H1 (cell line): ENCODE measurements at regions of chr1 and their contacts with region 1.

Region 1: GRCh38 chr1:114122941-114123618 is 30.6 kb downstream of the SYT6 start:
- DNase-seq: no peak
- H3K4me3 ChIP-seq: no peak overlapping the region
- H3K27ac ChIP-seq: no peak overlapping the region
- H3K4me1 ChIP-seq: peaks cover 2 to 17% (median 9%) of the 10 kb centered on the region in 4 experiments
- H3K27me3 ChIP-seq: no peaks in the 10 kb centered on the region
- CTCF ChIP-seq: no peak; a peak in 1 of 4 replicates
- EP300 ChIP-seq: no peak
- POLR2A ChIP-seq: no peak
- RAD21 ChIP-seq: peak; percentile 9 to 23; a peak in 1 of 4 replicates

Region 2: DNA sequence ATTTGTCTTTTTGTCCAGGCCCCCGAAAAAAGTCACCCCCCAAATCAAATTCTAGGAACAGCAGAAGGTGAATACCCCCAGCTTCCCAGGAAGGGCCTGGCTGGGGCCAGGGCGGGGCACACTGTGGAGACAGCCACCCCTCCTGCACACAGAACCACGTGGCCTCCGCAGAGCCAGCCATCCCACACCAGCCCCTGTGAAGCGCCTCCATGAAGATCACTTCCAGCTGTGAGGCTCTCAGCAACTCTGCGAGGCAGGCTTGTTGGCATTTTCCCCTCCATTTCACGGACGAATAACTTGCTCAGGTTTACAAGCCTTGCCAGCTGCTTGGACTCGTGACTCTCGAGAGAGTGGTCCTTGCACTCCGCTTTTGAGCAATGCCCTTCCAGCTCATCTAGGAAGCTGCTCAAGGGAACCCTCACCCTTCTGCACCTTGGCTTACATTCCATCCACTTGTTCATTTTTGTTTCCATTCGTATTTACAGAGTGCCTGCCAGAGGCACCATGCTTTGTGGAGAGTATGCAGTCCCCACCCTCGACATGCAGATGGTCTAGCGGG is 17.6 kb before region 1 on chr1:
- CTCF ChIA-PET with region 1: interaction called, 11 read pairs
- POLR2A ChIA-PET with region 1: interaction called, 6 read pairs
- DNase-seq: no peak
- H3K4me3 ChIP-seq: no peak overlapping the region
- H3K27ac ChIP-seq: no peak overlapping the region
- H3K4me1 ChIP-seq: peaks cover 0 to 12% (median 7%) of the 10 kb centered on the region in 4 experiments
- H3K27me3 ChIP-seq: no peaks in the 10 kb centered on the region; a peak in 1 of 7 replicates
- CTCF ChIP-seq: no peak
- EP300 ChIP-seq: no peak
- POLR2A ChIP-seq: no peak
- RAD21 ChIP-seq: no peak

Region 3: GRCh38 chr1:114134518-114134917 is 11.4 kb after region 1 on chr1:
- CTCF ChIA-PET with region 1: interaction called, 16 read pairs
- POLR2A ChIA-PET with region 1: interaction called, 3 read pairs
- DNase-seq: no peak
- H3K4me3 ChIP-seq: no peak overlapping the region
- H3K27ac ChIP-seq: no peak overlapping the region
- H3K4me1 ChIP-seq: peaks cover 0 to 8% (median 4%) of the 10 kb centered on the region in 4 experiments; a peak in 2 of 7 replicates
- H3K27me3 ChIP-seq: no peaks in the 10 kb centered on the region
- CTCF ChIP-seq: no peak
- EP300 ChIP-seq: no peak
- POLR2A ChIP-seq: no peak
- RAD21 ChIP-seq: no peak

Region 4: DNA sequence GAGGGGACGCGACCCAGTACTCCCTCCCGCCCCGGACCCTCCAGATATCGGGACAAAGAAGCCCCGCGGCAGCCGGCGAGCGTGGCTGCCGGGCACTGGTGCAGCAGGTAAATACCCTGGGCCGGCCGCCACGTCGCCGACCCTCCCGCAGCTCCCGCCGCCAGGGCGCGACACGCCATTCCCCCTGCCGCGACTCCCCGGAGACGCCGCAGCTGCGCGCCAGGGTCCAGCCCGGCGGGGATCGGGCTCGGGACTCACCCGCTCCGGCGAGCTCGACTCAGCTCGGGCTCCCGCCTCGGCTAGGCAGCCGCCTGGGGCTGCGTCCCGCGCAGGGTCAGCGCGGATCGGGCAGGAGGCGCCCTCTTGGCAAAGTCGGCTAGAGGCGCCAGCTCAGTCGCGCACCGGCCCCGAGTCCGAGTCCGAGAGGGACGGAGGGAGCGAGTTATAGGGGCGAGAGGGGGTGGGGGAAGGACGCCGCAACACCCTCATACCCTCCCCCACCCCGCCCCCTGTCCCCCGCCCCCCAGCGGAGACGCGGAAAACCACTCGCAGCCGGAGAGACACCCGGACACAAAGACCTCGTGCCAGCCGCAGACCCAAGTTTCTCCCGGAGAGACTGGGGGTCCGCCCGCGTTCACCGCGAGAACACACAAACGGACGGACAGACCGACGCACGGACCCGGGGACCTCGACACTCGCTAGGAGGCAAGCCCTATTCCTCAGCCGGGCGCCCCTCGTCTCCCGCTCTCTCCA is 29.6 kb after region 1 on chr1:
- CTCF ChIA-PET with region 1: interaction called, 5 read pairs
- POLR2A ChIA-PET with region 1: interaction called, 15 read pairs
- DNase-seq: peak in 1 of 2 experiments; percentile 71
- H3K4me3 ChIP-seq: peak overlapping the region; percentile 79 to 85 (median 82)
- H3K27ac ChIP-seq: no peak overlapping the region
- H3K4me1 ChIP-seq: peaks cover 9 to 45% (median 22%) of the 10 kb centered on the region in 4 experiments
- H3K27me3 ChIP-seq: peaks cover 0 to 22% (median 20%) of the 10 kb centered on the region in 4 experiments; a peak in 6 of 7 replicates
- CTCF ChIP-seq: no peak
- EP300 ChIP-seq: no peak
- POLR2A ChIP-seq: no peak
- RAD21 ChIP-seq: 0 out of 4 replicates have a peak, but pooled peaks of 1 of the 2 experiments have one; percentile 4

Region 5: DNA sequence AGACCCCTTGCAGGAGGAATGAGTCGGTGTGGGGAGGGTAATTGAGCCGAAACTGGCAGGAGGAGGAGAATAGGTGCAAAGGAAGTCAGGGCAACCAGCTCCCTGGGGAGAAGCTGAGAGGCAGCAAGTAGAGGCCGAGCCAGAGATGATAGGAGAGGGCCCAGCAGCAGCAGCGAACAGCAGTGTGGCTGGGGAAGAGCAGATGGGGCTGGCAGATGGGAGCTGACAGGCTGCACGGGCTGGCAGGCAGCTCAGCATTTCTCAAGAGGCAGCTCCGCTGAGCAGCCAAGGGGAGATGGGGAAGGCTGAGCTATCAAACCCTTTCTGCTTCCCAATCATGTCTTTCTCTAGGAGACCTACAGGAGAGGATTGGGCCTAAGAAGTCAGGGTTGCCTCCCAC is 229.7 kb after region 1 on chr1:
- CTCF ChIA-PET with region 1: no interaction called
- POLR2A ChIA-PET with region 1: no interaction called
- DNase-seq: peak in 1 of 2 experiments; percentile 45
- H3K4me3 ChIP-seq: no peak overlapping the region
- H3K27ac ChIP-seq: no peak overlapping the region
- H3K4me1 ChIP-seq: peaks cover 0 to 6% (median 3%) of the 10 kb centered on the region in 4 experiments; a peak in 4 of 7 replicates
- H3K27me3 ChIP-seq: 0 out of 7 replicates have a peak, but pooled peaks cover 0 to 3% (median 0%) of the 10 kb centered on the region in 4 experiments
- CTCF ChIP-seq: no peak
- EP300 ChIP-seq: no peak
- POLR2A ChIP-seq: no peak
- RAD21 ChIP-seq: no peak